ENCODE measurements at regions of chr13 and their contacts with region 1.

Region 1: GRCh38 chr13:42106998-42107397 is 58.5 kb downstream of the DGKH start:
- DNase-seq: no peak
- H3K4me3 ChIP-seq: no peak overlapping the region
- H3K27ac ChIP-seq: no peak overlapping the region
- H3K4me1 ChIP-seq: no peaks in the 10 kb centered on the region
- H3K27me3 ChIP-seq: no peaks in the 10 kb centered on the region
- CTCF ChIP-seq: no peak
- POLR2A ChIP-seq: no peak

Region 2: GRCh38 chr13:41284512-41285288 is 822.3 kb before region 1 on chr13:
- intact Hi-C with region 1: no loop called
- DNase-seq: no peak
- H3K4me3 ChIP-seq: no peak overlapping the region
- H3K27ac ChIP-seq: no peak overlapping the region
- H3K4me1 ChIP-seq: no peaks in the 10 kb centered on the region
- H3K27me3 ChIP-seq: no peaks in the 10 kb centered on the region
- CTCF ChIP-seq: no peak
- POLR2A ChIP-seq: no peak

Region 3: DNA sequence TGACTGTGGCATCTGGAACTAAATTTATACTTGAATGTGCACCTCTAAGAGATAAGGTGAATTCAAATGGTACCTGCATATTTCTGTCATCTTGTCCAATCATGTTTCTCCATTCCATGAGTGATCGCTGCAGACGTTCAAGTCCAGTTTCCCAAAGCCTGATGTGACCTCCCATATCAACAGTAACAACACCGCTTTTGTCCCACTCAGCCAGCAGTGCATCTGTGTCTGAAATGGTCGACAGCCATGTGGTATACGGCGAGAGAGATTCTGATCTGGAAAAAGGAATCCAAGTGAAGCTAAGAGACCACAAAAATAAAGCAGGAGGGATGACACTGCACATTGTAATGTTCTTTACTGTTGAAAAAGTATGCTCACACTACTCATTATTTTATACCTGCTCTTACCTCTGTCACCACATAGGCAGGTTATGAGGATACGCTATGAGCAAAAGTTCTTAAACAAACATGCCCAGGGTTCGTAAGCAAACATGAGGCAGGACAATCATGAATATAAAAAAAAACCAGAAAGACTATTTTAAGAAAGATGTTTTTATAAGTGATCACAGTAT is 436.0 kb before region 1 on chr13:
- intact Hi-C with region 1: loop called (anchors 5 kb)
- DNase-seq: no peak
- H3K4me3 ChIP-seq: no peak overlapping the region
- H3K27ac ChIP-seq: no peak overlapping the region
- H3K4me1 ChIP-seq: no peaks in the 10 kb centered on the region
- H3K27me3 ChIP-seq: no peaks in the 10 kb centered on the region
- CTCF ChIP-seq: no peak
- POLR2A ChIP-seq: no peak

Region 4: GRCh38 chr13:41811588-41812021 is 295.4 kb before region 1 on chr13:
- intact Hi-C with region 1: no loop called
- DNase-seq: no peak
- H3K4me3 ChIP-seq: no peak overlapping the region
- H3K27ac ChIP-seq: no peak overlapping the region
- H3K4me1 ChIP-seq: peaks cover 5 to 6% of the 10 kb centered on the region in 2 donors
- H3K27me3 ChIP-seq: no peaks in the 10 kb centered on the region
- CTCF ChIP-seq: no peak
- POLR2A ChIP-seq: no peak

Region 5: GRCh38 chr13:42038661-42039456 is 68.1 kb before region 1 on chr13:
- intact Hi-C with region 1: no loop called
- DNase-seq: peak; percentile 1 to 7
- H3K4me3 ChIP-seq: no peak overlapping the region
- H3K27ac ChIP-seq: peak overlapping the region in 2 of 3 donors; percentile 85 to 99
- H3K4me1 ChIP-seq: peaks cover 0 to 4% of the 10 kb centered on the region in 2 donors
- H3K27me3 ChIP-seq: no peaks in the 10 kb centered on the region
- CTCF ChIP-seq: no peak
- POLR2A ChIP-seq: no peak

Region 6: DNA sequence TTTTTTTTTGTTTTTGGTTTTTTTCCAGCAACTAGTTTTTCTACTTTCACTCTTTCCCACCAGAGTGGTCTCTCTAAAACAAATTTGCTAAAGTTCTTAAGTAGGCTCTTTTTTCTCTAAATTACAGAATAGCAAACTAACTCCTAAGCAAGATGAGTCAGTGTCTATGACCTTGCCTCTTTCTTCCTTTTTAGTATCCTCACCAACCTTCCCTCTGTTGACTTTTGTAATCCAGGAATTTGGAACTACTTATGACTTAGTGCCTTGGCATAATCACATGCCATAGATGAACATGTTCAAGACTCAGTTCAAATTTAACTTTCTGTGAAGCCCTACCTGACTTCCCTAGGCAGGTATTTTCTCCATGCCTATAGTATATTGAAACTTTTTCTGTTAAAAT is 132.6 kb after region 1 on chr13:
- intact Hi-C with region 1: no loop called
- DNase-seq: no peak
- H3K4me3 ChIP-seq: no peak overlapping the region
- H3K27ac ChIP-seq: no peak overlapping the region
- H3K4me1 ChIP-seq: no peaks in the 10 kb centered on the region
- H3K27me3 ChIP-seq: no peaks in the 10 kb centered on the region
- CTCF ChIP-seq: no peak
- POLR2A ChIP-seq: no peak